ENCODE measurements at regions of chr9 and their contacts with region 1.

Region 1: GRCh38 chr9:135961277-135961705 is at the start of gene UBAC1:
- DNase-seq: peak; percentile 98
- total RNA-seq, gene UBAC1: 90.3 TPM

Region 2: GRCh38 chr9:135907431-135908092 is 53.7 kb before region 1 on chr9 and contains the start of gene CAMSAP1:
- intact Hi-C with region 1: loop called (anchors 2 kb)
- DNase-seq: peak; percentile 98
- total RNA-seq, gene CAMSAP1: 25.5 TPM